Heart left ventricle (tissue), 16 donors: ENCODE measurements at regions of chr18 and their contacts with region 1.

Region 1: DNA sequence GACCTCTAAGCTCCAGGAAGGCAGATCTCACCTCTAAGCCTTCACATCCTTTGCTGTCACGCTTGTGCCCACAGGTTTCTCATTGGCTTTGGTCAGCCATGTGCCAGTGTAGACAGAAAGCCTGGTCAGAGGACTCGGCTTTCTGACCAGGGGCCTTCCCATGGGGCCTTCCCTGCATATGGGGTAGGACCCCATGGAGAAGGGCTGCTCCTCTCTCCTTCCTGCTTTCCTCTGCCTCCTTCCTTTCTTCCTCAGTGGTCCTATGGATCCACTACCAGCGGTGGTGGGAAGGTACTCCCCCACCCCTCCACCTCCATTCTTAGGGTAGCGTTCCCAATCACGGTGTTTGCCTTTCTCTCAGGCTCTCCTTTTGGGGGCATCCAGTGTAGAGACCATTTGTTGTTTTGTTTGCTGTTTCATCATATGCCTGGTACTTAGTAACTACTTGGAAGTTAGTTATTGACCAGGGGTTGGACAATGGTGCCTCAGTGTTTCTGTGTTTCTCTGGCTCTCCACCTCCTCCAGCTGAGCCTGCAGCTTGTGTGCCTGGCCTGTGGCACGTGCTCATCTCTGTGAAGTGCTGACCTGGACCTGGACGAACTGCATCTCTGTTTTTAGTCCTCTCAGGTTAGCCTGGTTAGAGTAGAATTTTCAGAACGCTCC is 71.6 kb downstream of the ZNF407 start:
- DNase-seq: no peak
- ATAC-seq: no peak
- H3K4me3 ChIP-seq: no peak overlapping the region
- H3K27ac ChIP-seq: no peak overlapping the region
- H3K4me1 ChIP-seq: no peaks in the 10 kb centered on the region
- H3K27me3 ChIP-seq: no peaks in the 10 kb centered on the region
- CTCF ChIP-seq: no peak
- POLR2A ChIP-seq: no peak

Region 2: GRCh38 chr18:74698881-74699280 is 29.6 kb after region 1 on chr18:
- intact Hi-C with region 1: loop called in 1 of 10 experiments (anchors 1 kb)
- DNase-seq: no peak
- ATAC-seq: no peak
- H3K4me3 ChIP-seq: no peak overlapping the region
- H3K27ac ChIP-seq: no peak overlapping the region
- H3K4me1 ChIP-seq: peaks cover 0 to 8% (median 0%) of the 10 kb centered on the region in 12 donors
- H3K27me3 ChIP-seq: no peaks in the 10 kb centered on the region
- CTCF ChIP-seq: no peak
- POLR2A ChIP-seq: no peak

Region 3: DNA sequence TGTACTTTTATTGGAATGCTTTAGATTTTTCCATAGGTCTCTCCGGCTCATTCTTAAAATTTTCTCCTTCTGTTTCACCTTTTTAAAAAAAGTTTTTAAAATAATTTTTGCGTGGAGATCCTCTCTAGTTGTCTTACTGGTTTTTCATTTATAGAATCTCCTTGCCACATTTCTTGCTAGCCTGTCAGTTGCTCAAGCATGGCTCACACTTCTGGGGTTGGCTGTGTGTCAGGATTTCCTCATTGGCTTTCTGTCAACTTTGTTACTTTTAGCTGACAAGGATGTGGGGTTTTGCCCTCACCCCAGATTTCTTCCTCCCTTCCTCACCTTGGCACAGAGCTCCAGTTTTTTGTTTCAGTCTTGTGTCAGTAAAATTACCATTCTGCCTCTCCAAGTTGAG is 53.0 kb after region 1 on chr18:
- intact Hi-C with region 1: loop called in 1 of 10 experiments (anchors 5 kb)
- DNase-seq: no peak
- ATAC-seq: no peak
- H3K4me3 ChIP-seq: no peak overlapping the region
- H3K27ac ChIP-seq: no peak overlapping the region
- H3K4me1 ChIP-seq: peaks cover 0 to 14% (median 0%) of the 10 kb centered on the region in 12 donors
- H3K27me3 ChIP-seq: no peaks in the 10 kb centered on the region
- CTCF ChIP-seq: no peak
- POLR2A ChIP-seq: no peak